ENCODE measurements at regions of chr11 and their contacts with region 1.

Region 1: GRCh38 chr11:2400069-2400760 is at the start of gene TSSC4:
- DNase-seq: peak; percentile 100
- H3K4me3 ChIP-seq: peak within 1 kb of the TSS; percentile 56 to 86 (median 81)
- H3K27ac ChIP-seq: peak within 1 kb of the TSS; percentile 99
- H3K4me1 ChIP-seq: peaks cover 18% of the 10 kb centered on the region
- H3K27me3 ChIP-seq: no peaks in the 10 kb centered on the region
- CTCF ChIP-seq: peak; percentile 99
- POLR2A ChIP-seq: peak; percentile 96
- total RNA-seq, gene TSSC4: 59.6 and 61.9 TPM in 2 replicates

Region 2: GRCh38 chr11:2377511-2378443 is 22.4 kb before region 1 on chr11:
- CTCF ChIA-PET with region 1: interaction called, 23 read pairs
- POLR2A ChIA-PET with region 1: interaction called, 12 read pairs
- dilution Hi-C with region 1: no loop called
- intact Hi-C with region 1: loop called (anchors 1 kb)
- DNase-seq: peak; percentile 58
- H3K4me3 ChIP-seq: peak overlapping the region; percentile 72 to 80 (median 75)
- H3K27ac ChIP-seq: peak overlapping the region; percentile 91
- H3K4me1 ChIP-seq: peaks cover 37% of the 10 kb centered on the region
- H3K27me3 ChIP-seq: no peaks in the 10 kb centered on the region
- CTCF ChIP-seq: no peak
- POLR2A ChIP-seq: no peak

Region 3: GRCh38 chr11:2382936-2383851 is 17.0 kb before region 1 on chr11:
- CTCF ChIA-PET with region 1: interaction called, 23 read pairs
- POLR2A ChIA-PET with region 1: interaction called, 12 read pairs
- dilution Hi-C with region 1: no loop called
- intact Hi-C with region 1: loop called (anchors 1 kb)
- DNase-seq: peak; percentile 51
- H3K4me3 ChIP-seq: no peak overlapping the region
- H3K27ac ChIP-seq: peak overlapping the region; percentile 91
- H3K4me1 ChIP-seq: peaks cover 56% of the 10 kb centered on the region
- H3K27me3 ChIP-seq: no peaks in the 10 kb centered on the region
- CTCF ChIP-seq: no peak
- POLR2A ChIP-seq: no peak

Measured in endothelial cell of umbilical vein (primary cell).